HepG2 (cell line): ENCODE measurements at regions of chr12 and their contacts with region 1.

Region 1: DNA sequence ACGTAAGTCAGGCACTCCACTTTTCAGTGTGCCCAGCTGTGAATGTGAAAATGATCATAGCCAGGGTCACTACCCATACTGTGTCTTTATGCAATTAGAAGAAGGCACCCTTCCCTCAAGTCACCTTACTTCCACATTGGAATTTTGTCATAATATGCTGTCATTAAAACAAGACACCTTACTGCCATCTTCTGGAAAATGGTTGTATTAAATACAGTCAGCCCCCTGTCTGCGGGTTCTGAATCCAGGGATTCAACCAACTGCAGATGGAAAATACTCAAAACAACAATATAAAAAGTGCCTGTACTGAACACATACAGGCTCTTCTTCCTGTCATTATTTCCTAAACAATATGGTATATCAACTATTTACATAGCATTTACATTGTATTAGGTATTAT is 70.2 kb upstream of the TBX5 start:
- DNase-seq: peak; percentile 40
- ATAC-seq: peak; percentile 40; the same call in 1 of the 3 replicates
- H3K4me3 ChIP-seq: no peak overlapping the region
- H3K27ac ChIP-seq: no peak overlapping the region
- H3K4me1 ChIP-seq: no peaks in the 10 kb centered on the region
- H3K27me3 ChIP-seq: peaks cover 2 to 38% of the 10 kb centered on the region in 2 experiments; a peak in 4 of 5 replicates
- CTCF ChIP-seq: peak; percentile 48
- EP300 ChIP-seq: no peak
- POLR2A ChIP-seq: no peak
- RAD21 ChIP-seq: no peak; the same call in 1 of the 2 replicates

Region 2: DNA sequence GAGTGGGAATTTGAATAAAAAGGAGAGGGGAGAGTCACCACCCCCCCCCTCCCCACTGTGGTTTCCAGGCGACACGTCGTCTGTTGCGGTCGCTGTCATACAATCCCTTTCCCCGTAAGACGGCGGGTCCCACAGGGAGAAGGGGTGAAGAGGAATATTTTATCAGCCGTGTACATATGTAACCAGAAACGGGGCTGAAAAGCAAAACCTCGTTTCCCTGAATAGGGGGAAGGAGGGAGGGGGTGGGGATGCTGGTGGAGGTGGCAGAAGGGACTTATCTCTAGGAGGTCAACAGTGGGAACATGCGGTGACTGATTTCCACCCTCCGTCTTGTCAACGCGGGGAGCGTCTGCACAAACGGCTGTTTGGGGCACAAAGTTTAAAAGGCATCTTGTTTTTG is 681.4 kb before region 1 on chr12:
- CTCF ChIA-PET with region 1: no interaction called
- POLR2A ChIA-PET with region 1: no interaction called
- in situ Hi-C with region 1: no loop called
- intact Hi-C with region 1: no loop called
- DNase-seq: no peak
- ATAC-seq: no peak
- H3K4me3 ChIP-seq: no peak overlapping the region
- H3K27ac ChIP-seq: no peak overlapping the region
- H3K4me1 ChIP-seq: peaks cover 24% of the 10 kb centered on the region
- H3K27me3 ChIP-seq: peaks cover 0 to 1% of the 10 kb centered on the region in 2 experiments; a peak in 1 of 5 replicates
- CTCF ChIP-seq: no peak
- EP300 ChIP-seq: no peak
- POLR2A ChIP-seq: no peak
- RAD21 ChIP-seq: no peak

Region 3: DNA sequence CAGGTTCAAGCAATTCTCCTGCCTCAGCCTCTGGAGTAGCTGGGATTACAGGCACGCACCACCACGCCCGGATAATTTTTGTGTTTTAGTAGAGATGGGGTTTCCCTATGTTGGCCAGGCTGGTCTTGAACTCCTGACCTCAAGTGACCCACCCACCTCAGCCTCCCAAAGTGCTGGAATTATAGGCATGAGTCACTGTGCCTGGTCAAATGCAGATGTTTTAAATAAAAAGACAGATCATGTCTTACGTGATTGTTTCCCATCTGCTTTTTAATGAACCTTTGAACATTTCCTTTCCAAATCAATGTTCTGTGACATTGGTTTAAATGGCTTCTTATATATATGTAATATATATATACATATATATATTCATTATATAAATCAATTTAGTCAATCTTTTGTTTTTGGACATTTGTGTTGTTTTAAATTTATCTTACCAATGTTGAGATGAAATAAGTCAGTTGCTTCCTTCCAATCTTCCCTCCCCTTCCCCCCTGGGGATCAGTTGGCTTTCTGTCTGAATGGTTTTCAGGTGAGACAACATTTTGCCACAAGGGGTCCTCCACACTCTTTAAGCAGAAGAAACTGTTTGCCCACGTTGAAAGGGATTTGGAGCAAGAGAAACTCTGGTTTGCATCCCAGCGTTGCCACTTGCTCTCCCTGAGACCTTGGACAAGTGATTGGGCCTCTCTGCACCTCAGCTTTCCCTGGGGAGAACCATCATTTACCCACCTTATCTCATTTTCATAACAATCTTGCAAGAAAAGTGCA is 462.4 kb before region 1 on chr12:
- CTCF ChIA-PET with region 1: no interaction called
- POLR2A ChIA-PET with region 1: no interaction called
- in situ Hi-C with region 1: loop called (anchors 10 kb)
- intact Hi-C with region 1: no loop called
- DNase-seq: peak; percentile 39
- ATAC-seq: no peak
- H3K4me3 ChIP-seq: no peak overlapping the region
- H3K27ac ChIP-seq: no peak overlapping the region
- H3K4me1 ChIP-seq: no peaks in the 10 kb centered on the region
- H3K27me3 ChIP-seq: no peaks in the 10 kb centered on the region
- CTCF ChIP-seq: peak; percentile 65
- EP300 ChIP-seq: no peak
- POLR2A ChIP-seq: no peak
- RAD21 ChIP-seq: no peak

Region 4: DNA sequence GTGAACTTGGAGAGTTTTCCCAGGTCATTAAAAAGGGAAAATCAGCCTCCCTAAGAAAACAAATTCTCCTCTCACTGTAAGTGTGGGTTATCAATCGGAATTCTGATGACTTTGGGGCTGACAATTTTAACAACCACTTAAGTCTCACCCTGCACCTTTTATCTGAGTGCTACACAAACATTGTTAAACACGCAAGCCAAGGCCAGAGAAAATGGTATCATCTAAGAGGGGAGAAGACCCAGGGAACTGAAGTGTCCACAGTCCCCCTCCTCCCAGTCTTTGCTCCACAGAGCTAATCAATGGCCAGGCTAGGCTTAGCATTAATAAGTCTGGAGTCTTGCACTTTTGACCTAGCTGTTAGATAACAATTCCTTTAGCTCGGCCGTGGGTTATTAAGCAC is 18.5 kb before region 1 on chr12:
- CTCF ChIA-PET with region 1: no interaction called
- POLR2A ChIA-PET with region 1: no interaction called
- in situ Hi-C with region 1: no loop called
- intact Hi-C with region 1: loop called (anchors 1 kb)
- DNase-seq: no peak
- ATAC-seq: no peak
- H3K4me3 ChIP-seq: no peak overlapping the region
- H3K27ac ChIP-seq: no peak overlapping the region
- H3K4me1 ChIP-seq: no peaks in the 10 kb centered on the region
- H3K27me3 ChIP-seq: no peaks in the 10 kb centered on the region; a peak in 1 of 5 replicates
- CTCF ChIP-seq: no peak
- EP300 ChIP-seq: no peak
- POLR2A ChIP-seq: no peak
- RAD21 ChIP-seq: no peak